ENCODE measurements at regions of chr12 and their contacts with region 1.

Region 1: GRCh38 chr12:101850199-101850598 is 19.4 kb upstream of the GNPTAB start:
- DNase-seq: no peak
- ATAC-seq: no peak
- H3K4me3 ChIP-seq: no peak overlapping the region
- H3K27ac ChIP-seq: no peak overlapping the region
- H3K4me1 ChIP-seq: peaks cover 6% of the 10 kb centered on the region
- H3K27me3 ChIP-seq: no peaks in the 10 kb centered on the region
- CTCF ChIP-seq: no peak
- POLR2A ChIP-seq: no peak
- RAD21 ChIP-seq: no peak

Region 2: DNA sequence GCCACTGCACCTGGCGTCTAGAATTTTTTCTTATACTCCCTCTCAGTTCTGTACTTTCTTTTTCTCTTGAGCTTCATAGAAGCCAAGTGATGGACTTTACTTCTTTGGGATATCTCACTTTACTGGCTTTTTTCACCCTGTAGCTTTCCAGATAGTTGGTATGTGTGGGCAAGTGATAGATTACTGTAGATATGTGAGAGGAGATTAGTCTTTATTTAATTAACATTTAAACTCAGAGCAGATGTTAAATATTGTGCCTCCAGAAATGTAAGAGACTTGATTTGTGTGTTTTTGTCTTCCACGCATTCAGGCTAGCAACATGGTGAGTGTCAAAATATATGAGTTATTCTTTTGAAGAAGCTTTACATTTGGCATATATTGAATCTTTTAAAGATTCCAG is 1532.8 kb before region 1 on chr12:
- CTCF ChIA-PET with region 1: no interaction called
- POLR2A ChIA-PET with region 1: no interaction called
- dilution Hi-C with region 1: no loop called
- in situ Hi-C with region 1: no loop called
- intact Hi-C with region 1: no loop called
- DNase-seq: no peak
- ATAC-seq: no peak
- H3K4me3 ChIP-seq: no peak overlapping the region
- H3K27ac ChIP-seq: no peak overlapping the region
- H3K4me1 ChIP-seq: no peaks in the 10 kb centered on the region
- H3K27me3 ChIP-seq: no peaks in the 10 kb centered on the region
- CTCF ChIP-seq: no peak
- POLR2A ChIP-seq: no peak
- RAD21 ChIP-seq: no peak

Region 3: DNA sequence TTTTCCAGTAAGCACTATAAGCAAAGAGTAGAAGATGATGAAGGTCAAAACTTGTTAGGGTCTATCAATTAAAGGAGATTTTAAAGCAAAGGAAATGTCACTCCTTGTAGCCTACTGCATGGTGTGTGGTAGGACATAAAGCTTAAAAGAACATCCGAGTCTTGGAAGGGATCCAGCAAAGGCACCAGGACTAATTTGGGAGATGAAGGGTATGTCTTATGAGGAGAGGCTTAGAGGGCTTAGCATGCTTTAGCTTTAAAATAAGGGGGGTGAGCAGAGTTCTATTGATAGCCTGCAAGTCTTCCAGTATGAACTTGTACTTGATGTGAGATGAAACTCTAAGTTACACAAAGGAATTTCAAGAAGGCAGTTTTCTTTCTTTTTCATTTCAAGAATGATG is 267.3 kb before region 1 on chr12:
- CTCF ChIA-PET with region 1: no interaction called
- POLR2A ChIA-PET with region 1: no interaction called
- dilution Hi-C with region 1: no loop called
- in situ Hi-C with region 1: no loop called
- intact Hi-C with region 1: no loop called
- DNase-seq: no peak
- ATAC-seq: no peak
- H3K4me3 ChIP-seq: no peak overlapping the region
- H3K27ac ChIP-seq: no peak overlapping the region
- H3K4me1 ChIP-seq: no peaks in the 10 kb centered on the region
- H3K27me3 ChIP-seq: no peaks in the 10 kb centered on the region
- CTCF ChIP-seq: no peak
- POLR2A ChIP-seq: no peak
- RAD21 ChIP-seq: no peak

Region 4: DNA sequence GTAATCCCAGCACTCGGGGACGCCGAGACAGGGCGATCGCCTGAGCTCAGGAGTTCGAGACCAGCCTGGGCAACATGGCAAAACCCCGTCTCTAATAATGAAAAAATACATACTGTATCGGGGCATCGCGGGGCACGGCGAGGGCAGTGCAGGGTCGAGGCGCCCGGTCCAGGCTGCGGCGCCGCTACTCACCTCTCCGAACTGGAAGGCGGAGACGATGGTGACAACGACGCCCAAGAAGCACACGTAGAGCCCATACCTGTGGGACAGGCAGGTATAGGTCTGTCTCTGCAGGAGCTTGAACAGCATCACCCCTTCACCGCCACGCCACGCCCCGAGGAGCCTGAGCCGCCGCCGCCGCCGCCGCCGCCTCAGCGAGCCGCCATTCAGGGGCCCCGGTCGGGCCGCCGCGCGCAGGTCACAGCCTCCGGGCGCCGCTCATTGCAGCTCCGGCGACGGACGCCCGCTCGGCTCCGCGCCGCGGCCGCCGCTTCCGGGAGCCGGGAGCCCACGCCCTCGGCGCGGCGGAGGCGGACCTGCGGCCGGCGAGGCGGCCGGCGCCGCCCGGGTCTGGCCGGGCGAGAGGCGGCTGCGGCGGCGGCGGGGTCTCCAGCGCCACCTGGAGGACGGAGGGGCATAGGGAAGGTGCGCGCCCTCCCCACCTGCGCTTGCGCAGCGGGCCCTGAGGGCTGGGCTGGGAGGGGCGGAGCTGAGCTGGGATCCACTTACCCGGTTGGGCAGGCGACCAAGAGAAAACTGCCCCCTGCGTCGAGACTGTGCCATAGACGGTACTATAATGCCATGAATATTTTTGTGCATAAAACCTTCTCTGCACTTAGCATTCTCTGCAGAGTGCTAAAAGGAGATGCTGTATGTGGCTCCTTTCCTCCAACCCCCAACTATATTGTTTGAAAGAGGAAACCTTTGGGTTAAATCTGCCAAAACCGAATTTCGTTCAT is 19.6 kb before region 1 on chr12 and contains the start of gene GNPTAB:
- CTCF ChIA-PET with region 1: interaction called, 6 read pairs
- POLR2A ChIA-PET with region 1: interaction called, 12 read pairs
- dilution Hi-C with region 1: no loop called
- in situ Hi-C with region 1: no loop called
- intact Hi-C with region 1: no loop called
- DNase-seq: peak; percentile 88
- ATAC-seq: peak; percentile 99
- H3K4me3 ChIP-seq: peak within 1 kb of the TSS; percentile 97
- H3K27ac ChIP-seq: peak within 1 kb of the TSS; percentile 56
- H3K4me1 ChIP-seq: no peaks in the 10 kb centered on the region
- H3K27me3 ChIP-seq: no peaks in the 10 kb centered on the region
- CTCF ChIP-seq: peak; percentile 94
- POLR2A ChIP-seq: peak; percentile 41; the same call in 1 of the 2 replicates
- RAD21 ChIP-seq: peak; percentile 63
- total RNA-seq, gene GNPTAB: 24.2 and 28.9 TPM in 2 replicates

Region 5: DNA sequence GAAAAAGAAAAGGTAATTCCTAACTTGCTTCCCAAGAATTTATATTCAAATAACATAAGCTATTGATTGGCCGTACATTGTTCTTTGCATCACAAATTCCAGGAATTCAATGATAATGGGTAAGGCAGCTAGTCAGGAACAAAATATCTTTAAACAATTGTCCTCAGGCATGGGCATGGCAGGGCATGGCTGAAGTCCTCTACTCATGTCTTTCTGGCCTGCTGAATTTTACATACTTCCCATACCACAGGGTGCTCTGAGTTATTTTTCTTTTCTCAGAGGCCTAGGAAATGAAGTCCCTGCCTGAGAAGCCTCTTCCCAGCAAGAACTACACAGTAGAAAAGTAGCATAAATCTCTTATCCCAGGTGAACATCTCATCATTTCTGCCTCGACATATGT is 12.0 kb after region 1 on chr12:
- CTCF ChIA-PET with region 1: no interaction called
- POLR2A ChIA-PET with region 1: no interaction called
- dilution Hi-C with region 1: no loop called
- in situ Hi-C with region 1: no loop called
- intact Hi-C with region 1: no loop called
- DNase-seq: no peak
- ATAC-seq: peak; percentile 50
- H3K4me3 ChIP-seq: no peak overlapping the region
- H3K27ac ChIP-seq: no peak overlapping the region
- H3K4me1 ChIP-seq: 0 out of 2 replicates have a peak, but pooled peaks cover 2% of the 10 kb centered on the region
- H3K27me3 ChIP-seq: no peaks in the 10 kb centered on the region
- CTCF ChIP-seq: no peak
- POLR2A ChIP-seq: no peak
- RAD21 ChIP-seq: no peak

Region 6: GRCh38 chr12:102107970-102108369 is 257.8 kb after region 1 on chr12:
- CTCF ChIA-PET with region 1: interaction called, 10 read pairs
- POLR2A ChIA-PET with region 1: no interaction called
- dilution Hi-C with region 1: no loop called
- in situ Hi-C with region 1: no loop called
- intact Hi-C with region 1: no loop called
- DNase-seq: no peak
- ATAC-seq: no peak
- H3K4me3 ChIP-seq: no peak overlapping the region
- H3K27ac ChIP-seq: no peak overlapping the region
- H3K4me1 ChIP-seq: no peaks in the 10 kb centered on the region
- H3K27me3 ChIP-seq: no peaks in the 10 kb centered on the region
- CTCF ChIP-seq: no peak
- POLR2A ChIP-seq: no peak
- RAD21 ChIP-seq: no peak

Measured in IMR-90 (cell line).